Naive thymus-derived CD4-positive, alpha-beta T cell (primary cell): ENCODE measurements at regions of chr1 and their contacts with region 1.

Region 1: DNA sequence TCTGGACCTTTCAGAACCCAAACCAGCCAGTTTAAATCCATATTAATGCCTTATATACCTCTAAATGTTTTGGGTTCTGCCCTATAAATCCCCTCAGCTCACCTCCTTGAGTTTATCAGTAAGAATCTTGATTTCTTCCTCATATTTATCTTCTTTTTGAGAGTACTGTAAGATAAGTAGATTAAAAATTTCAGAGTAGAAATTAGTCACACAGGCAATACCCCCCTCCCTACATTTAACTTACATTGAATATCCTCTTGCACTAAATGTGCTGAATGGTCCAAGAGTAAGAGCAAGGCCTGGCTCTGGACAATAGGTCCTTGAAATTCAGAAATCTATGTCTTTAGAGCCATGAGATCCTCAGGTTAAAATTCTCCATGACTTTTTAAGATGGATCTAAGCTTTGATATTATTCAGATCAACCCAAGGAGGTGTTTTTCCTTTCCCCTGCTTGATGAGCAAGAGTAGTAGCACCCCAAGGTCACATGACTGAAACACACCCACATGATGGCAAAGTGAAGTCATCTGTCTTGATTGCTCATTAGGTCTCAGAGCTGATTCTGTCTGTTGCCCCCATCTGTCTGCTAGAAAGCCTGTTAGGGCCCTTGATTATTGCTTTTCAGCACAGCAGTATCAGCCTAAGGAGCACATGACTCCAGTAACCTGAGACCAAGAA is 15.8 kb upstream of the NUP210L start:
- DNase-seq: peak in 1 of 9 donors; percentile 58
- ATAC-seq: peak; percentile 31
- H3K4me3 ChIP-seq: no peak overlapping the region
- H3K4me3 Mint-ChIP-seq: peak overlapping the region in 1 of 10 donors; percentile 16
- H3K27ac ChIP-seq: peak overlapping the region; percentile 15
- H3K27ac Mint-ChIP-seq: peak overlapping the region; percentile 35 to 86 (median 79)
- H3K4me1 ChIP-seq: peaks cover 4 to 5% of the 10 kb centered on the region in 2 donors
- H3K4me1 Mint-ChIP-seq: peaks cover 13 to 51% (median 42%) of the 10 kb centered on the region in 7 donors
- H3K27me3 ChIP-seq: no peaks in the 10 kb centered on the region
- H3K27me3 Mint-ChIP-seq: no peaks in the 10 kb centered on the region

Region 2: DNA sequence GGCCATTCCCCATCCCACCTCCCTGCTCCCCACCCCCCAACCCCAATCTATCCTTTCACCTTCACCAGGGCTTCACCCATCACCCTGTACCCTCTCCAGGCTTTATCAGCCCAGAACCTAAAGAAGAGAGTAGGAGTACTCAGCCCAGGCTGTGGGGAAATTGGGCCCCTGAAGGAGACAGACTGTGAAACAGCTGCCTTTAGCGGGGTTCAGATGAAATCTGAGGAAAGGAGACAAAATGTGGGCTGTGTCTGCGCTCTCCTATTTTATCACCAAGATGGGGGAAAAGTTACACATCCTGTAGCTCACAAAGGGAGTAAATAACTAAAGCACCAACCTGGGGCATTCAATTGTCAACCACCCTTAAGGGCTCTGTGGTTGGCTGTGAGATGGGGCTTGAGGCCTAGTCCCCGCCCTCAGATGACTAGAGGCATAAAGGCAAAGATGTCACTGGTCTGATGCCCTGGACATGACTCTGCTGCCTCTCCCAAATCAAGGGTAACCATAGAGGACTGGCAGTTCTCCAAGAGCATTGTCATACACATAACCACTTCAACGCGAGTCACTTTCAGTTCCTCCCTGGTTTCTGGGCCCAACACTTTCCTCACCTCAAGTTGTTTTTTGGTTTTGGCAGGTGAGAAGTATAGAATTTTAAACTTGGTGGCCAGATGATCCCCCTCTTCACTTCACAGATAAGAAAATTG is 365.5 kb before region 1 on chr1:
- CTCF ChIA-PET with region 1: no interaction called
- POLR2A ChIA-PET with region 1: no interaction called
- intact Hi-C with region 1: no loop called
- DNase-seq: peak in 8 of 9 donors; percentile 37 to 82 (median 51)
- ATAC-seq: peak; percentile 98
- H3K4me3 ChIP-seq: no peak overlapping the region
- H3K4me3 Mint-ChIP-seq: peak overlapping the region in 8 of 10 donors; percentile 0 to 47 (median 34)
- H3K27ac ChIP-seq: peak overlapping the region; percentile 53
- H3K27ac Mint-ChIP-seq: peak overlapping the region; percentile 28 to 97 (median 83)
- H3K4me1 ChIP-seq: peaks cover 9 to 30% of the 10 kb centered on the region in 2 donors
- H3K4me1 Mint-ChIP-seq: peaks cover 23 to 43% (median 32%) of the 10 kb centered on the region in 7 donors
- H3K27me3 ChIP-seq: no peaks in the 10 kb centered on the region
- H3K27me3 Mint-ChIP-seq: no peaks in the 10 kb centered on the region

Region 3: GRCh38 chr1:154183045-154183915 is 12.6 kb after region 1 on chr1:
- CTCF ChIA-PET with region 1: no interaction called
- POLR2A ChIA-PET with region 1: interaction called, 15 read pairs
- intact Hi-C with region 1: no loop called
- DNase-seq: peak; percentile 84 to 94 (median 94)
- ATAC-seq: peak; percentile 89
- H3K4me3 ChIP-seq: peak overlapping the region; percentile 93
- H3K4me3 Mint-ChIP-seq: peak overlapping the region; percentile 98 to 100 (median 100)
- H3K27ac ChIP-seq: peak overlapping the region; percentile 95
- H3K27ac Mint-ChIP-seq: peak overlapping the region; percentile 98 to 100 (median 99)
- H3K4me1 ChIP-seq: peaks cover 25 to 44% of the 10 kb centered on the region in 2 donors
- H3K4me1 Mint-ChIP-seq: peaks cover 44 to 49% (median 48%) of the 10 kb centered on the region in 7 donors
- H3K27me3 ChIP-seq: no peaks in the 10 kb centered on the region
- H3K27me3 Mint-ChIP-seq: peaks cover 0 to 7% (median 0%) of the 10 kb centered on the region in 5 donors

Region 4: DNA sequence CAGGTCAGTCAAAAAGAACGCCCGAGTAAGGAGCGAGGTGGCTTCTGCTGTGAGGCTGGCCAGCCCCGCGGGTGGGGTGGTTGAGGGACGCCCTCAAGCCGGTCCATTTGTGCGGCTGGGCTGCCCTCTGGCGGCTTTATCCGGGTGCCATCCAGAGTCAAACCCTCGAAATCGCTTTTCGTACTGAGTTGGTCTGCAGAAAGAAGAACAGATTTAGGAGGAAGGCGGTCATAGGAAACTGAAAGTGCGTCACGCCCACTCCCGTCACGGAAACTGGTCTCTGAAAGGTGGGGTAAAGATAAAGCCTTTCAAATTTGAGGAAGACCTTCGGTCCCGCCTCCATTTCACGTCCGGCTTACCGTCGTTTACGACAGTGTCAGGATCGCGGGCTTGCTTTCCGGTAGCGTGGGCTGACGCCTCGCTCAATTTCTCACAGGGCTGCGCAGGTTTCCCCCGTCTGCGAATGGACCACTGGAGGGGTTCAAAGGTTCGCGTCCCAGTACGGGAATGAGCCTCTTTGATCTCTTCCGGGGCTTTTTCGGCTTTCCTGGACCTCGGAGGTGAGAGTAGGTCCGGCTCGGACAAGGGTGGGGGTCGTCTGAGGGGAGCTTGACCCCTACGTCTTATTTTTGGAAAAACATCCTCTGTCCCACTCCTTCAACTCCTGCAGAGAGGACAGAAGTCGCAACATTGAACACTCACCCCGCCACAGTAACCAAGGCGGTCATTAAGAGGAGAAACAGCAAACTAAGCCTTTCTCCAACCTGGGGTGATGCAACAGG is 101.7 kb after region 1 on chr1 and contains the start of gene HAX1:
- CTCF ChIA-PET with region 1: no interaction called
- POLR2A ChIA-PET with region 1: no interaction called
- intact Hi-C with region 1: no loop called
- DNase-seq: peak; percentile 74 to 99 (median 97)
- ATAC-seq: peak; percentile 95
- H3K4me3 ChIP-seq: peak within 1 kb of the TSS; percentile 98
- H3K4me3 Mint-ChIP-seq: peak within 1 kb of the TSS; percentile 94 to 99 (median 97)
- H3K27ac ChIP-seq: peak within 1 kb of the TSS; percentile 92
- H3K27ac Mint-ChIP-seq: peak within 1 kb of the TSS; percentile 97 to 99 (median 99)
- H3K4me1 ChIP-seq: peaks cover 10 to 20% of the 10 kb centered on the region in 2 donors
- H3K4me1 Mint-ChIP-seq: peaks cover 20 to 47% (median 42%) of the 10 kb centered on the region in 7 donors
- H3K27me3 ChIP-seq: no peaks in the 10 kb centered on the region
- H3K27me3 Mint-ChIP-seq: no peaks in the 10 kb centered on the region
- total RNA-seq, gene HAX1: 71.9 to 111 (median 104) TPM